Common myeloid progenitor, CD34-positive (primary cell): ENCODE measurements at regions of chr1 and their contacts with region 1.

Region 1: GRCh38 chr1:205141236-205142101 is 19.7 kb upstream of the RBBP5 start:
- DNase-seq: peak; percentile 83 to 93 (median 90)
- H3K4me3 ChIP-seq: peak overlapping the region in 1 of 7 experiments; percentile 24
- H3K27ac ChIP-seq: no peak overlapping the region
- H3K4me1 ChIP-seq: peaks cover 0 to 6% (median 4%) of the 10 kb centered on the region in 4 experiments
- H3K27me3 ChIP-seq: no peaks in the 10 kb centered on the region

Region 2: GRCh38 chr1:205121660-205122488 is 19.6 kb before region 1 on chr1 and contains the start of gene RBBP5:
- CTCF ChIA-PET with region 1: interaction called, 30 read pairs
- POLR2A ChIA-PET with region 1: interaction called, 4 read pairs
- DNase-seq: peak; percentile 98 to 99 (median 98)
- H3K4me3 ChIP-seq: peak within 1 kb of the TSS; percentile 80 to 100 (median 97)
- H3K27ac ChIP-seq: peak within 1 kb of the TSS; percentile 99 to 100
- H3K4me1 ChIP-seq: peaks cover 10 to 42% (median 32%) of the 10 kb centered on the region in 4 experiments
- H3K27me3 ChIP-seq: no peaks in the 10 kb centered on the region

Region 3: GRCh38 chr1:205129447-205130029 is 11.9 kb before region 1 on chr1:
- CTCF ChIA-PET with region 1: interaction called, 30 read pairs
- POLR2A ChIA-PET with region 1: interaction called, 3 read pairs
- DNase-seq: no peak
- H3K4me3 ChIP-seq: no peak overlapping the region
- H3K27ac ChIP-seq: no peak overlapping the region
- H3K4me1 ChIP-seq: no peaks in the 10 kb centered on the region
- H3K27me3 ChIP-seq: no peaks in the 10 kb centered on the region